ENCODE measurements at regions of chr2 and their contacts with region 1.

Region 1: DNA sequence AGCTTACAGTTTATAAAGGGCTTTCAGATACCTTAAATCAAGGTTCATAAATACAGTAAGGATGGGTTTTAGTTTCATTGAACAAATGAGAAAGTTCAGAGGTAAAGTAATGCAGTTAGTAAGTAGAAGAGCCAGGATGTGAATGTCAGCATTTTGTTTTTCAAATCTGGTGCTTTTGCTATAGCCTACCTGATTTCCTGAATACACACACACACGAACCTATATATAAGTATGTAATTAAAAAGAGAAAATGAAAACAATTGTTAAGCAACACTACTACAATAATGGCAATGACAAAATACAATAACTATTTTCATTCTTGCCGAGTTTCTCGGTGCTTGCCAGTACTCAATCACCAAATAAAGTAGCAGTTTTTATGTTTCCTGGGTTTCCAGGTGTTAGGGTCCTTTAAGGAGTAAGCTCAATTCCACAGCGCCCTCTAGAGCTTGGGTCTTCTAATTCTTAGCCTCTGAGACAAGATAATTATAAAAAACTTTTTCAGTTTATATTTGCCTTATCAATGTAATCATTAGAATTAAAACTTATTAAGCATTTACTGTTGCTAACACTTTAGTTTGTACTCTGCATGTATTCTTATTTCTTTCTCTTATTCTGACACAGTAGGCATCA is 512.9 kb upstream of the ACVR2A start:
- DNase-seq: peak; percentile 68
- H3K4me3 Mint-ChIP-seq: no peak overlapping the region
- H3K27ac Mint-ChIP-seq: no peak overlapping the region
- H3K4me1 Mint-ChIP-seq: peaks cover 13% of the 10 kb centered on the region
- H3K27me3 Mint-ChIP-seq: no peaks in the 10 kb centered on the region

Region 2: DNA sequence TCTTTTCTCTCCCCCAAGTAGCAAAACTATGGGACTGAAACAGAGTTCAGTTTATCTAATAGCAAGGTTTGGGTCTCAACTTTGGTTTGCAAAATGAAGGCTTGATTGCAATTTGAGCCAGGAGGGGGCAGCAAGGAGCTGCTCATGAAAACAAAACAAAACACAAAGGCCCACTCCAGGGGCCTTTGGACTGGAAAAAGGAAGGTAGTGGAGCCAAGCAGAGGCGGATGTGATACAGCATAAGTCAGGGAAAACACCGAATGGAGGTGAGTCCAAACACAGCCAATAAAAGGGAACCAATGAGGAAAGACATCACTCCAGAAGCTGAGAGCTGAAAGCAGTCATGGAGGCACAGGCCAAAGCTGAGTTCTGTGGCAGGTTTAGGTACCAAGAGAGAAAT is 286.8 kb before region 1 on chr2:
- CTCF ChIA-PET with region 1: interaction called, 12 read pairs
- intact Hi-C with region 1: loop called (anchors 1 kb)
- DNase-seq: peak; percentile 67
- H3K4me3 Mint-ChIP-seq: no peak overlapping the region
- H3K27ac Mint-ChIP-seq: no peak overlapping the region
- H3K4me1 Mint-ChIP-seq: peaks cover 4% of the 10 kb centered on the region
- H3K27me3 Mint-ChIP-seq: no peaks in the 10 kb centered on the region

Region 3: DNA sequence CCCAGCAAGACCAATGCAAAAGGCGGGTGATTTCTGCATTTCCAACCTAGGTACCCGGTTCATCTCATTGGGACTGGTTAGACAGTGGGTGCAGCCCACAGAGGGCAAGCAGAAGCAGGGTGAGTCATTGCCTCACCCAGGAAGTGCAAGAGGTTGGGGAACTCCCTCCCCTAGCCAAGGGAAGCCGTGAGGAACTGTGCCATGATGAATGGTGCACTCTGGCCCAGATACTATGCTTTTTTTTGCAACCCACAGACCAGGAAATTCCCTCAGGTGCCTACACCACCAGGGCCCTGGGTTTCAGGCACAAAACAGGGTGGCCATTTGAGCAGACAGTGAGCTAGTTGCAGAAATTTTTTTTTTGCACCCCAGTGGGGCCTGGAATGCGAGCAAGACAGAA is 149.6 kb before region 1 on chr2:
- CTCF ChIA-PET with region 1: interaction called, 3 read pairs
- intact Hi-C with region 1: loop called (anchors 5 kb)
- DNase-seq: peak; percentile 72
- H3K4me3 Mint-ChIP-seq: no peak overlapping the region
- H3K27ac Mint-ChIP-seq: peak overlapping the region; percentile 73
- H3K4me1 Mint-ChIP-seq: peaks cover 18% of the 10 kb centered on the region
- H3K27me3 Mint-ChIP-seq: peaks cover 4% of the 10 kb centered on the region

Region 4: GRCh38 chr2:147288131-147288530 is 43.8 kb before region 1 on chr2:
- CTCF ChIA-PET with region 1: interaction called, 6 read pairs
- intact Hi-C with region 1: loop called (anchors 1 kb)
- DNase-seq: peak; percentile 45
- H3K4me3 Mint-ChIP-seq: no peak overlapping the region
- H3K27ac Mint-ChIP-seq: peak overlapping the region; percentile 78
- H3K4me1 Mint-ChIP-seq: peaks cover 24% of the 10 kb centered on the region
- H3K27me3 Mint-ChIP-seq: no peaks in the 10 kb centered on the region